ENCODE measurements at regions of chr2 and their contacts with region 1.

Region 1: DNA sequence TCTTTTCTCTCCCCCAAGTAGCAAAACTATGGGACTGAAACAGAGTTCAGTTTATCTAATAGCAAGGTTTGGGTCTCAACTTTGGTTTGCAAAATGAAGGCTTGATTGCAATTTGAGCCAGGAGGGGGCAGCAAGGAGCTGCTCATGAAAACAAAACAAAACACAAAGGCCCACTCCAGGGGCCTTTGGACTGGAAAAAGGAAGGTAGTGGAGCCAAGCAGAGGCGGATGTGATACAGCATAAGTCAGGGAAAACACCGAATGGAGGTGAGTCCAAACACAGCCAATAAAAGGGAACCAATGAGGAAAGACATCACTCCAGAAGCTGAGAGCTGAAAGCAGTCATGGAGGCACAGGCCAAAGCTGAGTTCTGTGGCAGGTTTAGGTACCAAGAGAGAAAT is 799.7 kb upstream of the ACVR2A start:
- DNase-seq: peak; percentile 50
- ATAC-seq: no peak
- H3K4me3 Mint-ChIP-seq: no peak overlapping the region
- H3K27ac Mint-ChIP-seq: no peak overlapping the region
- H3K4me1 Mint-ChIP-seq: no peaks in the 10 kb centered on the region
- H3K27me3 Mint-ChIP-seq: no peaks in the 10 kb centered on the region
- CTCF ChIP-seq: peak; percentile 61

Region 2: GRCh38 chr2:147017951-147018642 is 27.0 kb before region 1 on chr2:
- CTCF ChIA-PET with region 1: no interaction called
- POLR2A ChIA-PET with region 1: no interaction called
- intact Hi-C with region 1: no loop called
- DNase-seq: no peak
- ATAC-seq: no peak
- H3K4me3 Mint-ChIP-seq: no peak overlapping the region
- H3K27ac Mint-ChIP-seq: no peak overlapping the region
- H3K4me1 Mint-ChIP-seq: no peaks in the 10 kb centered on the region
- H3K27me3 Mint-ChIP-seq: no peaks in the 10 kb centered on the region
- CTCF ChIP-seq: no peak

Region 3: DNA sequence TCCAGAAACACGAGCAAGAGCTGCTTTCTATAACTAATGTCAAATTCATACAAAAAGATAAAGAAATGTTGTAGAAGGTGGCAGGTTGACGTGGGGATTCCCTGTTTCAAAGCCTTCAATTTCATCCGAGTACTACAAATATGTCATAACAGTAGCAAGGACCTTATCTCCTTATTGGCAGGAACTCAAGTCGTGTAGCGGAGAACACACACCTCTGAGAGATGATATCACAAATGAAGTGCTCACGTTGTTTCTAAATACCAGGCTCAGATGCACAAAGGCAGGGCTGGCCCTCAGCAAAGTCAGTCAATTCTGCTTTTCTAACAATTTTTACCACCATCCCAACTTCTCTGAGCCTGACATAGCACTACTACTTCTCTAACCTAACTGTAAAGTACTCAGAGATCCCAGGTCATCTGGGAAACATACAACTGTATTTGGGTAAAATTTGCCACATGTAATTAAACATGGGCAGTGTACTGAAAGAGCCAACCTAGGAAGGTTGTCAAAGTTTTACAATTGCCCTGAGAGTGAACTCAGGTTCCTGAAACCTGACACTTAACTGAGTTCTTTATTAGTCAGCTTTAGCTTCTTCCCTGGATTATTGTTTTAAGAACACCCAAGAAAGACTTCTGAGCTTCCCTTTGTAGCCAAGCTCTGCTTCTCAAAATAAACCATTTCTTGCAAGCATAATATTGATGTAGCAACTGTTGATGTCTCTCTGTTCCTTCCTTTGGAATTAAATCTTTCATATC is 14.0 kb before region 1 on chr2:
- CTCF ChIA-PET with region 1: interaction called, 12 read pairs
- POLR2A ChIA-PET with region 1: no interaction called
- intact Hi-C with region 1: no loop called
- DNase-seq: no peak
- ATAC-seq: no peak
- H3K4me3 Mint-ChIP-seq: no peak overlapping the region
- H3K27ac Mint-ChIP-seq: no peak overlapping the region
- H3K4me1 Mint-ChIP-seq: no peaks in the 10 kb centered on the region
- H3K27me3 Mint-ChIP-seq: peaks cover 6% of the 10 kb centered on the region
- CTCF ChIP-seq: no peak

Region 4: DNA sequence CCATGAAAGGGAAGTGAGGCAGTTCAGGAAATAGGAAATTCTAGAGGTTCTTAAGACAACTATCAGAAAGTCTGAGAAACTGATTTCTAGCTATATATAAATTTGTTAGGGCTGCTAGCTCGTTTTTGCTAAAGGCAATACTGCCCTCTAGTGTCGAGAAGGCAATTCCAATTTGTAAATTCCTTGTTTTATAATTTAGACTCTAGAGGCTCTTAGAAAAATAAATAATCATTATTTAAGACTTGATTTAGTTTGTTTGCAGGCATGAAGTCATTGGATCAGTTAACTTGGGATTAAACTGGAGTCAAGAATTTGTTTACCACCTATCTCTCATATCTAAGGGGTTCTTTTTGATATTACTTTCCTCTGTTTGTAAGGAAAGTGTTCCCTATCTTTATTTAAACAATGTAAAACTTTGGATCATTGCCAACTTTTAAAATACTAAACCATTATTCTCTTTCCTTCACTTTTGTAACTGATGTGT is 865.9 kb after region 1 on chr2:
- CTCF ChIA-PET with region 1: interaction called, 24 read pairs
- POLR2A ChIA-PET with region 1: no interaction called
- intact Hi-C with region 1: loop called (anchors 10 kb)
- DNase-seq: peak; percentile 30
- ATAC-seq: no peak
- H3K4me3 Mint-ChIP-seq: no peak overlapping the region
- H3K27ac Mint-ChIP-seq: no peak overlapping the region
- H3K4me1 Mint-ChIP-seq: no peaks in the 10 kb centered on the region
- H3K27me3 Mint-ChIP-seq: no peaks in the 10 kb centered on the region
- CTCF ChIP-seq: peak; percentile 88